K562 (cell line): ENCODE measurements at regions of chr1 and their contacts with region 1.

Region 1: GRCh38 chr1:17485280-17485679 is 45.8 kb upstream of the RCC2 start:
- DNase-seq: peak in 3 of 4 experiments; percentile 37 to 61 (median 51)
- ATAC-seq: peak; percentile 48
- H3K4me3 ChIP-seq: no peak overlapping the region
- H3K27ac ChIP-seq: no peak overlapping the region
- H3K4me1 ChIP-seq: peaks cover 20 to 23% of the 10 kb centered on the region in 2 experiments; a peak in 4 of 5 replicates
- H3K27me3 ChIP-seq: no peaks in the 10 kb centered on the region; a peak in 1 of 5 replicates
- CTCF ChIP-seq: peak; percentile 66 to 76 (median 73)
- EP300 ChIP-seq: no peak
- POLR2A ChIP-seq: no peak
- RAD21 ChIP-seq: peak; percentile 26 to 61

Region 2: DNA sequence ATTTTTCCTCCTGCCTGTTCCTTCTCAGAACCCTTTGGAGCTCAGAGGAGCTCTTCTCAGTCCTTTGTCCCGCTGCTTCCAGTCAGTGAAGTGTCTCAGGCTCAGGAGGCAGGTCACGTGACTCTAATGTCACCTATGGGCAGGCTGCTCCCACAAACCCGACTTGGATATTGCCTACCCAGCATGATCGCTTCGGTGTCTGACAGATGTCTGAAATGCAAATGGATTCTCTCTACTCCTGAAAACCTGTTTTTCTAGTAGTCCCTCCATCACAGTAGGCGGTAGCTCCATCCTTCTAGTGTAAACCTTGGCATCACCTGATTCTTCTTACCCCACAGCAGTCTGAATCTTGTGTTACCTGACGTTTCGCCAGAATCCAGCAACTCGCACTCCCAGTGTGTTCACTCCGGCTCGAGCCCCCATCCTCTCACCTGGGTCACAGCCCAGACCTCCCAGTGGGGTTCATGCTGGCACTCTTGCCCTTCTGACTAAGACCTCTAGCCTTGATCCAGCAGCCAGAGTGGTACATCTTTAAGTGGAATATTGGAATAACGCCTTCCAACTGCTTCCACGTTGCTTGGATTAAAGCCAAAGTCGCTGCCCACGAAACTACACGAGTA is 107.8 kb before region 1 on chr1:
- CTCF ChIA-PET with region 1: no interaction called
- POLR2A ChIA-PET with region 1: no interaction called
- in situ Hi-C with region 1: no loop called
- intact Hi-C with region 1: no loop called
- DNase-seq: peak in 1 of 4 experiments; percentile 50
- ATAC-seq: no peak
- H3K4me3 ChIP-seq: no peak overlapping the region
- H3K27ac ChIP-seq: no peak overlapping the region
- H3K4me1 ChIP-seq: no peaks in the 10 kb centered on the region
- H3K27me3 ChIP-seq: peaks cover 57 to 83% of the 10 kb centered on the region in 2 experiments
- CTCF ChIP-seq: no peak
- EP300 ChIP-seq: no peak
- POLR2A ChIP-seq: no peak
- RAD21 ChIP-seq: no peak

Region 3: GRCh38 chr1:17419626-17420328 is 65.5 kb before region 1 on chr1:
- CTCF ChIA-PET with region 1: interaction called, 10 read pairs
- POLR2A ChIA-PET with region 1: interaction called, 3 read pairs
- in situ Hi-C with region 1: no loop called
- intact Hi-C with region 1: loop called (anchors 2 kb)
- DNase-seq: peak; percentile 78 to 86 (median 82)
- ATAC-seq: peak; percentile 91
- H3K4me3 ChIP-seq: no peak overlapping the region
- H3K27ac ChIP-seq: no peak overlapping the region
- H3K4me1 ChIP-seq: peaks cover 0 to 11% of the 10 kb centered on the region in 2 experiments; a peak in 3 of 5 replicates
- H3K27me3 ChIP-seq: no peaks in the 10 kb centered on the region
- CTCF ChIP-seq: peak; percentile 93 to 99 (median 96)
- EP300 ChIP-seq: no peak
- POLR2A ChIP-seq: peak; percentile 46
- RAD21 ChIP-seq: peak; percentile 80 to 86